Caco-2 (cell line): ENCODE measurements at regions of chr6 and their contacts with region 1.

Region 1: GRCh38 chr6:110389689-110390382 is 25.5 kb downstream of the DDO start:
- DNase-seq: peak in 1 of 2 experiments; percentile 32
- H3K4me3 ChIP-seq: no peak overlapping the region
- H3K4me3 Mint-ChIP-seq: no peak overlapping the region
- H3K27ac Mint-ChIP-seq: no peak overlapping the region
- H3K4me1 ChIP-seq: peaks cover 18% of the 10 kb centered on the region
- H3K4me1 Mint-ChIP-seq: peaks cover 15% of the 10 kb centered on the region
- H3K27me3 ChIP-seq: no peaks in the 10 kb centered on the region
- H3K27me3 Mint-ChIP-seq: no peaks in the 10 kb centered on the region
- CTCF ChIP-seq: no peak

Region 2: GRCh38 chr6:109526905-109527628 is 862.8 kb before region 1 on chr6:
- CTCF ChIA-PET with region 1: no interaction called
- POLR2A ChIA-PET with region 1: no interaction called
- intact Hi-C with region 1: loop called (anchors 1 kb)
- DNase-seq: peak; percentile 53 to 67
- H3K4me3 ChIP-seq: no peak overlapping the region
- H3K4me3 Mint-ChIP-seq: no peak overlapping the region
- H3K27ac Mint-ChIP-seq: no peak overlapping the region
- H3K4me1 ChIP-seq: no peaks in the 10 kb centered on the region
- H3K4me1 Mint-ChIP-seq: no peaks in the 10 kb centered on the region
- H3K27me3 ChIP-seq: no peaks in the 10 kb centered on the region
- H3K27me3 Mint-ChIP-seq: peaks cover 4% of the 10 kb centered on the region
- CTCF ChIP-seq: peak; percentile 56 to 65

Region 3: DNA sequence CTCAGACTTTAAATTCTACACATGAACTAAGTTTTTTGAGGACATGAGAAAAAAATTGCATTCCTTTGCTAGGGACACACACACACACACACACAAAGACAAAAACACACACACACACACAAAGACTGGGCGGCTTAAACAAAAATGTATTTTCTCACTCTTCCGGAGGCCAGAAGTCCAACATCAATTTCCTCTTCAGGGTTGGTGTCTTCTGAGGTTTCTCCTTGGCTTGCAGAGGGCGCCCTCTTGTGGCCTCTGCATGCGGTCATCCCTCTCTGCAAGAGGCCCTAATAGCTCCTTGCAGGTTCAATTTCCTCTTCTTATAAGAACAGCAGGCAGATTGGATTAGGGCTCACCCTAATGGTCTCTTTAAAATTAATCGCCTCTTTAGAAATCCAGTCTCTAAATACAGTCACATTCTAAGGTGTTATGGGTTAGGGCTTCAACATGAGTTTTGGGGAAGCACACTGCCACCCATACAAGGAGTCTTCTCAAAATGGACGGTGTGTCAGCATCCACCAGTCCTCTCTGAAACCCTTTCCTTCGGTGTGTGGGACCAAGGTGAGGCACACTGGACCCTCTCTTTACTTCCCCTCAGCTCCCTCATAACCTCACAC is 350.4 kb before region 1 on chr6:
- CTCF ChIA-PET with region 1: interaction called, 22 read pairs
- POLR2A ChIA-PET with region 1: no interaction called
- intact Hi-C with region 1: loop called (anchors 1 kb)
- DNase-seq: peak; percentile 82 to 86
- H3K4me3 ChIP-seq: peak overlapping the region; percentile 31
- H3K4me3 Mint-ChIP-seq: peak overlapping the region; percentile 79
- H3K27ac Mint-ChIP-seq: peak overlapping the region; percentile 60
- H3K4me1 ChIP-seq: no peaks in the 10 kb centered on the region
- H3K4me1 Mint-ChIP-seq: peaks cover 12% of the 10 kb centered on the region
- H3K27me3 ChIP-seq: no peaks in the 10 kb centered on the region; the same call in 1 of the 2 replicates
- H3K27me3 Mint-ChIP-seq: peaks cover 8% of the 10 kb centered on the region
- CTCF ChIP-seq: peak; percentile 84 to 91

Region 4: DNA sequence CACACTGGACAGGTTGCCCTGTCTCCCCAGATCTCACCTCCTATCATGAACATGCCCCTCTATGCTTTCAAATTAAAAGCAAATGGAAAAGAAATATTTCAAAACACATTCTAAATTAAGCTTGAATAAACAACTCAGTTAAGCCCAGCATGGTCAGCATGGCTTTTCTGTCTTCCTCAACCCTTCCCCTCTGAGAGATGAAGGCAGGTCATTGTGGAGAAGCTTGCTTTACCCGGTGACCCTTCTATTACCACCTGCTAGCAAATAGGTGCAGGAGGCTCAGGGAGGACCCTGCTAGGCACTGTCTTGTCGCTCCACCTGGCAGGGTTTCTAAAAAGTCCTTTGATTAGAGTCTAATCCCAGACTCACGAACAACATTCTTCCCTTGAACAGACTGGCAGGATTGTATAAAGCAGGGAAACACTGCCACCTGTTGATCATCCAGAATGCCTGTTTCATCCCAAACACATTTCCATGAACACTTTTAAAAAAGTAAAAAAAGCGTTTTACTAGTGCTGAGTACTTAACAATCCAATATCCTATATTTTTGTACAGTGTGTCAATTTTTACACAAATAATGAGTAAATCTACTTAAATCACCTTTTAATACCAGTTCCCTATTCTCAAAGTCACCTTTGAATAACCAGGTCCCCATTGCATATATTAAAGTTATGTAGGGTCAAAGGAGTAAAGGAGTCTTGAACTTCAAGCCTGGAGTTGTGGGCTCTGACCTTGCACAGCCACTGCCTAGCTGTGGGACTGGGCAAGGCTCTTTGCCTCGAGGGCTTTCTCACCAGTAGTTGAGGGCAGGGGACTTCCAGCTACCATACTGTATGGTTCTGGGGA is 336.2 kb before region 1 on chr6:
- CTCF ChIA-PET with region 1: no interaction called
- POLR2A ChIA-PET with region 1: no interaction called
- intact Hi-C with region 1: loop called (anchors 2 kb)
- DNase-seq: peak in 1 of 2 experiments; percentile 57
- H3K4me3 ChIP-seq: no peak overlapping the region
- H3K4me3 Mint-ChIP-seq: no peak overlapping the region
- H3K27ac Mint-ChIP-seq: no peak overlapping the region
- H3K4me1 ChIP-seq: no peaks in the 10 kb centered on the region
- H3K4me1 Mint-ChIP-seq: no peaks in the 10 kb centered on the region
- H3K27me3 ChIP-seq: no peaks in the 10 kb centered on the region; the same call in 1 of the 2 replicates
- H3K27me3 Mint-ChIP-seq: peaks cover 10% of the 10 kb centered on the region
- CTCF ChIP-seq: peak; percentile 67 to 68

Region 5: DNA sequence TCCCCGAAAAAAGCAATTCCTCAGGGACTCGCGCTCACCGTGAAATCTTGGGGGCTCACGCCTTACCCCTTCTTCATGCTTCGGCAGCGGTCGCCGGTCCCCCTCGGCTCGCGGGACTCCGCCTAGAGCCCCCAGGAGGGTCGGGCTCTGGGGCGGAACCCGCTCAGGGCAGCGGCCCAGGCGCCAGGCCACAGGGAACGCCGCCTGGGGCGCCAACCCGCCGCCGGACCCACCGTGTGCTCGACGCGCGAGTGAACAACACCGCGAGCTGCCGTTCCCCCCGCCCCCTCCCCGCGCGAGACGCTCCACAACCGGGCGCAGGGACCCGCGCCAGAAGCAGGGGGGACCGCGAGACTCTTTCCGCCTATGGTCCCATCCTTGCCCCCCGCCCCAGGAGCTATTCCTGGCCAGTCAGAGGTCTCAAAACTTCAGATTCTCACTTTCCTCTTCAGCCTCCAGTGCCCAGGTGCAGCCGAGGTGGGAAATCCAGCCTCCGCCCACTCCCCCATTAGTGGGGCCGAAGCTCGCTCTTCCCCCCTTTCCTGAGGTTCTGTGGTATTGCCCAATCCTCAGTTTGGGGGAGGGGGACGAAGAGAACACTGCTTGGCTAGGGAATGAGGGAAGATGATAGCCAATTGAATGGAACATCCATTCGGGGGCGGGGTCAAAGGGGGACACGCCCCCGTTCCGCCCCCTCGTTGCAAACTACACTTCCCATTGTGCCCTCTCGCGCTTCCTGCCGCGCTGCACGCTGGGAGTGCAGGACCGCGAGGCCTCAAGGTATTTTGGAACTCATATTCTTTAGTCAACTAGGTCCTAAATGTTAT is 210.2 kb before region 1 on chr6 and contains the start of gene WASF1:
- CTCF ChIA-PET with region 1: interaction called, 7 read pairs
- POLR2A ChIA-PET with region 1: no interaction called
- intact Hi-C with region 1: loop called (anchors 1 kb)
- DNase-seq: peak; percentile 96
- H3K4me3 ChIP-seq: peak within 1 kb of the TSS; percentile 100
- H3K4me3 Mint-ChIP-seq: no peak within 1 kb of the TSS
- H3K27ac Mint-ChIP-seq: no peak within 1 kb of the TSS
- H3K4me1 ChIP-seq: 0 out of 2 replicates have a peak, but pooled peaks cover 3% of the 10 kb centered on the region
- H3K4me1 Mint-ChIP-seq: no peaks in the 10 kb centered on the region
- H3K27me3 ChIP-seq: no peaks in the 10 kb centered on the region
- H3K27me3 Mint-ChIP-seq: no peaks in the 10 kb centered on the region
- CTCF ChIP-seq: no peak
- total RNA-seq, gene WASF1: 7.3 and 7.4 TPM in 2 replicates

Region 6: GRCh38 chr6:110250838-110251237 is 139.0 kb before region 1 on chr6:
- CTCF ChIA-PET with region 1: no interaction called
- POLR2A ChIA-PET with region 1: no interaction called
- intact Hi-C with region 1: loop called (anchors 1 kb)
- DNase-seq: peak; percentile 48 to 57
- H3K4me3 ChIP-seq: no peak overlapping the region
- H3K4me3 Mint-ChIP-seq: no peak overlapping the region
- H3K27ac Mint-ChIP-seq: no peak overlapping the region
- H3K4me1 ChIP-seq: no peaks in the 10 kb centered on the region
- H3K4me1 Mint-ChIP-seq: no peaks in the 10 kb centered on the region
- H3K27me3 ChIP-seq: no peaks in the 10 kb centered on the region
- H3K27me3 Mint-ChIP-seq: peaks cover 3% of the 10 kb centered on the region
- CTCF ChIP-seq: peak; percentile 18 to 28

Region 7: DNA sequence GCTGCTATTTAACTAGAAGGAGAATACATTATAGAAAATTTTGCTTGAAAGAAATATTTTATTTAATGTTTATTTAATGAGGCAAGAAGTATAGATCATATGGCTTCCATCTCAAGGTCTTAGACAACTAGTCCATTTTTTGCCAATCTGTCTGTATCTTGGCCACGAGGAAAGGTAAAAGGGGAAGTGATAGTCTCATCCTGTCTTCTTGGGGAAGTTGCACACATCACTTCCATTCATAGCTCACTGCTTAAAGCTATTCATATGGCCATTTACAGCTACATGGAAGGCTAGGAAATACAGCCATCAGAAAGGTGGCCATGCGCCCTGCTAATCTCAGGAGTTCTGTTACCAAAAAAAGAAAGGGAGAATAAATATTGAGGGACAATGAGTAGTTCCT is 82.5 kb before region 1 on chr6:
- CTCF ChIA-PET with region 1: no interaction called
- POLR2A ChIA-PET with region 1: no interaction called
- intact Hi-C with region 1: no loop called
- DNase-seq: no peak
- H3K4me3 ChIP-seq: no peak overlapping the region
- H3K4me3 Mint-ChIP-seq: no peak overlapping the region
- H3K27ac Mint-ChIP-seq: no peak overlapping the region
- H3K4me1 ChIP-seq: no peaks in the 10 kb centered on the region
- H3K4me1 Mint-ChIP-seq: no peaks in the 10 kb centered on the region
- H3K27me3 ChIP-seq: no peaks in the 10 kb centered on the region
- H3K27me3 Mint-ChIP-seq: peaks cover 19% of the 10 kb centered on the region
- CTCF ChIP-seq: no peak

Region 8: GRCh38 chr6:110341663-110342596 is 47.9 kb before region 1 on chr6:
- CTCF ChIA-PET with region 1: interaction called, 9 read pairs
- POLR2A ChIA-PET with region 1: no interaction called
- intact Hi-C with region 1: loop called (anchors 1 kb)
- DNase-seq: peak; percentile 58 to 64
- H3K4me3 ChIP-seq: no peak overlapping the region
- H3K4me3 Mint-ChIP-seq: no peak overlapping the region
- H3K27ac Mint-ChIP-seq: no peak overlapping the region
- H3K4me1 ChIP-seq: no peaks in the 10 kb centered on the region
- H3K4me1 Mint-ChIP-seq: no peaks in the 10 kb centered on the region
- H3K27me3 ChIP-seq: no peaks in the 10 kb centered on the region
- H3K27me3 Mint-ChIP-seq: no peaks in the 10 kb centered on the region
- CTCF ChIP-seq: peak; percentile 53 to 79

Region 9: DNA sequence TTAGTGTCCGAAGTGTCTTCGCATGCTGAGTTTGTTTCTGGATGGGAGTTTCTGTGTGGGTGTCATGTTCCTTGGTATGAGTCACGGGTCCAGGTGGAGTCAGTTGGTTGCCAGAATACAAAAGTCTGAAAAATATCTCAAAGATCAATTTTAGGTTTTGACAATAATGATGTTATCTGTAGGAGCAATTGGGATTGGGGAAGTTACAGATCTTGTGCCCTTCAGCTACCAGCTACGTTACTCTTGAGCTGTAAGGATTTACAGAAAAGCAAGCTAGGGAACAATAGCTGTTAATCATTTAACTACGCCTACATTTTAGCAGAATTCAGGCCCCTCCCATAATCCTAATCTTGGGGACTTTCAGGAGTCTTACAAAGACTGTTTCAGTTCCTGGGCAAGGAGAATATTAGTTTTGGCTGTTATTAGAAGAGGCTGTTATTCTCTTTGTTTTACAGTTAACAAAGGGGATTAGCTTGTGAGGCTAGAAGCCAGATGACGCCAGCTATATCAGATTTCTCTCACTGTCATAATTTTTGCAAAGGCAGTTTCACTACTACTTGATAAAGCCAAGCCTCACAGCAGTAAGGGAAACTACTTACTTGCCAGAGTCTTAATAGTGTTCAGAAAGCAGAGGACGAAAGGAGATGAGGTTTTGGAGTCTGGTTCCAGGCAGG is 101.9 kb after region 1 on chr6:
- CTCF ChIA-PET with region 1: no interaction called
- POLR2A ChIA-PET with region 1: no interaction called
- intact Hi-C with region 1: no loop called
- DNase-seq: no peak
- H3K4me3 ChIP-seq: no peak overlapping the region
- H3K4me3 Mint-ChIP-seq: no peak overlapping the region
- H3K27ac Mint-ChIP-seq: no peak overlapping the region
- H3K4me1 ChIP-seq: no peaks in the 10 kb centered on the region
- H3K4me1 Mint-ChIP-seq: peaks cover 14% of the 10 kb centered on the region
- H3K27me3 ChIP-seq: no peaks in the 10 kb centered on the region
- H3K27me3 Mint-ChIP-seq: no peaks in the 10 kb centered on the region
- CTCF ChIP-seq: no peak

Region 10: GRCh38 chr6:110512979-110513378 is 123.1 kb after region 1 on chr6:
- CTCF ChIA-PET with region 1: no interaction called
- POLR2A ChIA-PET with region 1: no interaction called
- intact Hi-C with region 1: no loop called
- DNase-seq: no peak
- H3K4me3 ChIP-seq: no peak overlapping the region
- H3K4me3 Mint-ChIP-seq: no peak overlapping the region
- H3K27ac Mint-ChIP-seq: no peak overlapping the region
- H3K4me1 ChIP-seq: peaks cover 44% of the 10 kb centered on the region
- H3K4me1 Mint-ChIP-seq: peaks cover 25% of the 10 kb centered on the region
- H3K27me3 ChIP-seq: no peaks in the 10 kb centered on the region
- H3K27me3 Mint-ChIP-seq: no peaks in the 10 kb centered on the region
- CTCF ChIP-seq: no peak

Region 11: GRCh38 chr6:110537208-110538123 is 147.6 kb after region 1 on chr6:
- CTCF ChIA-PET with region 1: no interaction called
- POLR2A ChIA-PET with region 1: no interaction called
- intact Hi-C with region 1: no loop called
- DNase-seq: no peak
- H3K4me3 ChIP-seq: no peak overlapping the region
- H3K4me3 Mint-ChIP-seq: no peak overlapping the region
- H3K27ac Mint-ChIP-seq: peak overlapping the region; percentile 15
- H3K4me1 ChIP-seq: peaks cover 17% of the 10 kb centered on the region; the same call in 1 of the 2 replicates
- H3K4me1 Mint-ChIP-seq: peaks cover 19% of the 10 kb centered on the region
- H3K27me3 ChIP-seq: no peaks in the 10 kb centered on the region
- H3K27me3 Mint-ChIP-seq: no peaks in the 10 kb centered on the region
- CTCF ChIP-seq: no peak